A673 (cell line): ENCODE measurements at regions of chr14 and their contacts with region 1.

Region 1: GRCh38 chr14:75030147-75030546 is 21.1 kb downstream of the MLH3 start:
- DNase-seq: no peak
- H3K4me3 ChIP-seq: no peak overlapping the region
- H3K27ac ChIP-seq: no peak overlapping the region
- H3K4me1 ChIP-seq: peaks cover 9% of the 10 kb centered on the region
- H3K27me3 ChIP-seq: no peaks in the 10 kb centered on the region
- CTCF ChIP-seq: no peak

Region 2: GRCh38 chr14:75095690-75096089 is 65.5 kb after region 1 on chr14:
- CTCF ChIA-PET with region 1: no interaction called
- POLR2A ChIA-PET with region 1: interaction called, 21 read pairs
- intact Hi-C with region 1: no loop called
- DNase-seq: no peak
- H3K4me3 ChIP-seq: no peak overlapping the region
- H3K27ac ChIP-seq: no peak overlapping the region
- H3K4me1 ChIP-seq: no peaks in the 10 kb centered on the region
- H3K27me3 ChIP-seq: no peaks in the 10 kb centered on the region
- CTCF ChIP-seq: no peak